ENCODE measurements at regions of chr14 and their contacts with region 1.

Region 1: GRCh38 chr14:72516936-72517700 is 376.8 kb downstream of the DPF3 start:
- DNase-seq: peak; percentile 13 to 70 (median 40)
- ATAC-seq: peak; percentile 85
- H3K4me3 ChIP-seq: no peak overlapping the region
- H3K27ac ChIP-seq: no peak overlapping the region
- H3K4me1 ChIP-seq: no peaks in the 10 kb centered on the region; a peak in 1 of 5 replicates
- H3K27me3 ChIP-seq: no peaks in the 10 kb centered on the region; a peak in 1 of 5 replicates
- CTCF ChIP-seq: peak; percentile 63 to 82 (median 78)
- EP300 ChIP-seq: no peak
- POLR2A ChIP-seq: no peak
- RAD21 ChIP-seq: peak; percentile 75 to 82

Region 2: GRCh38 chr14:72822946-72823611 is 306.0 kb after region 1 on chr14:
- CTCF ChIA-PET with region 1: interaction called, 4 read pairs
- POLR2A ChIA-PET with region 1: interaction called, 3 read pairs
- in situ Hi-C with region 1: no loop called
- intact Hi-C with region 1: loop called (anchors 5 kb)
- DNase-seq: peak; percentile 47 to 91 (median 68)
- ATAC-seq: peak; percentile 77
- H3K4me3 ChIP-seq: no peak overlapping the region
- H3K27ac ChIP-seq: peak overlapping the region; percentile 60; the same call in 2 of the 3 replicates
- H3K4me1 ChIP-seq: peaks cover 14 to 31% of the 10 kb centered on the region in 2 experiments; a peak in 3 of 5 replicates
- H3K27me3 ChIP-seq: no peaks in the 10 kb centered on the region; a peak in 1 of 5 replicates
- CTCF ChIP-seq: peak in 1 of 3 experiments; percentile 22; a peak in 2 of 6 replicates
- EP300 ChIP-seq: peak; percentile 82
- POLR2A ChIP-seq: no peak
- RAD21 ChIP-seq: peak in 1 of 2 experiments; percentile 48; a peak in 2 of 4 replicates

Region 3: GRCh38 chr14:72904840-72905561 is 387.9 kb after region 1 on chr14:
- CTCF ChIA-PET with region 1: interaction called, 23 read pairs
- POLR2A ChIA-PET with region 1: interaction called, 3 read pairs
- in situ Hi-C with region 1: loop called (anchors 5 kb)
- intact Hi-C with region 1: loop called (anchors 1 kb)
- DNase-seq: peak; percentile 30 to 71 (median 42)
- ATAC-seq: peak; percentile 48; the same call in 2 of the 3 replicates
- H3K4me3 ChIP-seq: no peak overlapping the region
- H3K27ac ChIP-seq: no peak overlapping the region
- H3K4me1 ChIP-seq: peaks cover 5 to 23% of the 10 kb centered on the region in 2 experiments
- H3K27me3 ChIP-seq: no peaks in the 10 kb centered on the region
- CTCF ChIP-seq: peak; percentile 72 to 85 (median 76)
- EP300 ChIP-seq: no peak
- POLR2A ChIP-seq: no peak
- RAD21 ChIP-seq: peak; percentile 87 to 92

Region 4: GRCh38 chr14:72948481-72949138 is 431.5 kb after region 1 on chr14:
- CTCF ChIA-PET with region 1: interaction called, 22 read pairs
- POLR2A ChIA-PET with region 1: interaction called, 5 read pairs
- in situ Hi-C with region 1: loop called (anchors 5 kb)
- intact Hi-C with region 1: loop called (anchors 2 kb)
- DNase-seq: peak; percentile 37 to 60 (median 50)
- ATAC-seq: peak; percentile 81
- H3K4me3 ChIP-seq: no peak overlapping the region
- H3K27ac ChIP-seq: no peak overlapping the region
- H3K4me1 ChIP-seq: no peaks in the 10 kb centered on the region; a peak in 2 of 5 replicates
- H3K27me3 ChIP-seq: no peaks in the 10 kb centered on the region
- CTCF ChIP-seq: peak; percentile 50 to 79 (median 74)
- EP300 ChIP-seq: no peak
- POLR2A ChIP-seq: no peak
- RAD21 ChIP-seq: peak; percentile 45 to 68; a peak in 3 of 4 replicates

Region 5: DNA sequence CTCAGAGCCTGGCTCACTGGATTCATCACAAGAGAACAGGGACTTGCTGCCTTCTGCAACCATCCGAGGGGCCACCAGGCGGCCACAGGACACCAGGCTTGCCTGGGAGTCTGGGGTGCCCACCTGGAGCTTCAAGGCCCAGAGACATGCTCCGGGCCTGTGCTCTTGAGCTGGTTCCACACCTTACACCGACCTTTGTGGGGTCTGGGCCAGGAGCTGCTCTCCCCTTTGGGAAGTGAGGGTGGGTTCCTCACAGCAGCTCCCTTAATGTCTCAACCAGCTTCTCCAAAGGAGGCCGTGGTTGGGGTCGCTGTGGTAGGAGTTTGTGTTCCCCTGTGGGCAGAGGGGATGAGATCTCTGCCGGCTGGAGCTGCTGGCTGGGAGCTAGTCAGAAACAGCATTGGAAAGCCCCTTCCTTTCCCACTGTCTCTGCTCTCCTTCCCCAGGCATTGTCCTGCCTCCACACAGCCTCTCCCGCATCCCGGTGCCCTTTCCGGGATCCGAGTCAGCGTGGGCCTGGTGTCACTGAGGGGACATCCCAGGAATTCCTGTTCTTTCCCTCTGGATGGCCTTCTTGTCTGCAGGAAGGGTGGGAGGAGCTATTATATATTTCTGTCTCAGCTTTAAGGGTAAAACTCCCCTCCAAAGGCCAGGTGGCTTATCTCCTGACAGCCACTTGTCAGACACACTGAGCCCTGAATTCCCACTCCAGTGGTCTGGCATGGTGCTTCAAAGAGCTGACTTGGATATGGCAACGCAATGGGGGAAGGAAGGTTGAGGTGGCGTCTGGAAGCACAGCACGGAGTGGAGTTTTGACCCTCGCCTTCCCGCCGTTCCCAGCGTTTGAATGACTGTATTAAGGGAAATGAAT is 715.1 kb after region 1 on chr14:
- CTCF ChIA-PET with region 1: no interaction called
- POLR2A ChIA-PET with region 1: no interaction called
- in situ Hi-C with region 1: loop called (anchors 10 kb)
- intact Hi-C with region 1: no loop called
- DNase-seq: peak; percentile 34 to 54 (median 49)
- ATAC-seq: peak; percentile 89
- H3K4me3 ChIP-seq: no peak overlapping the region
- H3K27ac ChIP-seq: no peak overlapping the region
- H3K4me1 ChIP-seq: peaks cover 5 to 18% of the 10 kb centered on the region in 2 experiments; a peak in 4 of 5 replicates
- H3K27me3 ChIP-seq: peaks cover 26 to 48% of the 10 kb centered on the region in 2 experiments
- CTCF ChIP-seq: peak; percentile 58 to 69 (median 66)
- EP300 ChIP-seq: no peak
- POLR2A ChIP-seq: no peak
- RAD21 ChIP-seq: peak in 1 of 2 experiments; percentile 71; a peak in 2 of 4 replicates

Region 6: DNA sequence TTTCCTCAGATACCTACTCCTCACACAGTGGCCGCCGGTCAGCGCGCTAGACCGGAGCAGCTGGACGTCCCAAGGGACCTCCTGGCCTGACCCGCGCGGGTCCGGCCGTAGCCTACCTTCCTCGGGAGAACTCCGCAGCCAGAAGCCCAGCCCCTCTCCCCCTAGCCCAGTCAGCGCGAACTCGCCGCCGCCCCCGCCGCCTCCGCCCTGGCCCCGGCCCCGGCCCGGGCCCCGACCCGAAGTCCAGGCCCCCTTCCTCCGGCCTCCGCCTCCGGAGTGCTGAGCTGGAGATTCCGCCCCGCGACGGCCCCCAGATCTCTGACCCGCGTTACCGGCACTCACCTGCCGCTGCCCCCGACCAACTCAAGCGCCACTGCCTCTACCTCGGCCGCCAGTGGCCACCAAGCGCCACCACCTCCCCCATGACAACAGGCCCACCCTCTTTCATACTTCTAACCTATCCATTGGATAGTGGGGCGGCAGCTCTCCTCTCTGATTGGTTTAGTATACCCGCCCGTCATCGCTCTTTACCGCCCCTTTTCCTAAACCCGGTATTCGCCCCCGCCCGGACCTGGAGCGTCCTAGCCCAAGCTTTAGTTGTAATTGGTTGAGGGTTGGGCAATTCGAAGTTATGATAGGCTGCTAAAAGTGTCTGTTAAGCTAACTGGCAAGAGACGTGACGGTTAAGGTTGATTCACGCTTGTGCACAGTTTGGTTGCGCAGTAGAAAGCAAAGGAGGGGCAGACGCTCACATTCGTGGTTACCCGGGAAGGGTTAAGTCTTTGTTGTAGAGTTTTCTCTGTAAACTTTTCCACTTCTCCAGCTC is 941.2 kb after region 1 on chr14 and contains the start of gene NUMB:
- CTCF ChIA-PET with region 1: no interaction called
- POLR2A ChIA-PET with region 1: no interaction called
- in situ Hi-C with region 1: loop called (anchors 25 kb)
- intact Hi-C with region 1: no loop called
- DNase-seq: peak; percentile 95 to 98 (median 96)
- ATAC-seq: peak; percentile 93
- H3K4me3 ChIP-seq: peak within 1 kb of the TSS; percentile 89
- H3K27ac ChIP-seq: peak within 1 kb of the TSS; percentile 88
- H3K4me1 ChIP-seq: peaks cover 25 to 41% of the 10 kb centered on the region in 2 experiments
- H3K27me3 ChIP-seq: no peaks in the 10 kb centered on the region
- CTCF ChIP-seq: 0 out of 6 replicates have a peak, but pooled peaks of 2 of the 3 experiments have one; percentile 1 to 4
- EP300 ChIP-seq: no peak; the same call in 1 of the 2 replicates
- POLR2A ChIP-seq: peak; percentile 82
- RAD21 ChIP-seq: no peak
- polyA plus RNA-seq, gene NUMB: 23.5 to 47.8 TPM

Region 7: GRCh38 chr14:73472185-73473114 is 955.3 kb after region 1 on chr14:
- CTCF ChIA-PET with region 1: interaction called, 3 read pairs
- POLR2A ChIA-PET with region 1: no interaction called
- in situ Hi-C with region 1: loop called (anchors 25 kb)
- intact Hi-C with region 1: loop called (anchors 10 kb)
- DNase-seq: peak; percentile 38 to 60 (median 44)
- ATAC-seq: peak; percentile 82
- H3K4me3 ChIP-seq: no peak overlapping the region
- H3K27ac ChIP-seq: no peak overlapping the region
- H3K4me1 ChIP-seq: peaks cover 0 to 10% of the 10 kb centered on the region in 2 experiments; a peak in 2 of 5 replicates
- H3K27me3 ChIP-seq: no peaks in the 10 kb centered on the region
- CTCF ChIP-seq: peak; percentile 53 to 81 (median 60); a peak in 5 of 6 replicates
- EP300 ChIP-seq: no peak
- POLR2A ChIP-seq: no peak
- RAD21 ChIP-seq: peak; percentile 76 to 89

Measured in K562 (cell line).